Ascending aorta (tissue), 2 donors: ENCODE measurements at regions of chr1 and their contacts with region 1.

Region 1: GRCh38 chr1:59759156-59759925 is 55.4 kb upstream of the HOOK1 start:
- DNase-seq: peak; percentile 18 to 89
- H3K4me3 ChIP-seq: peak overlapping the region; percentile 27 to 51
- H3K27ac ChIP-seq: peak overlapping the region; percentile 10 to 40
- H3K4me1 ChIP-seq: peaks cover 0 to 5% of the 10 kb centered on the region in 2 donors
- H3K27me3 ChIP-seq: no peaks in the 10 kb centered on the region
- CTCF ChIP-seq: peak; percentile 92 to 96 (median 96)

Region 2: GRCh38 chr1:58515794-58516401 is 1243.4 kb before region 1 on chr1:
- intact Hi-C with region 1: loop called (anchors 10 kb)
- DNase-seq: peak in 1 of 2 donors; percentile 66
- H3K4me3 ChIP-seq: no peak overlapping the region
- H3K27ac ChIP-seq: no peak overlapping the region
- H3K4me1 ChIP-seq: no peaks in the 10 kb centered on the region
- H3K27me3 ChIP-seq: no peaks in the 10 kb centered on the region
- CTCF ChIP-seq: peak; percentile 52 to 72 (median 67)

Region 3: DNA sequence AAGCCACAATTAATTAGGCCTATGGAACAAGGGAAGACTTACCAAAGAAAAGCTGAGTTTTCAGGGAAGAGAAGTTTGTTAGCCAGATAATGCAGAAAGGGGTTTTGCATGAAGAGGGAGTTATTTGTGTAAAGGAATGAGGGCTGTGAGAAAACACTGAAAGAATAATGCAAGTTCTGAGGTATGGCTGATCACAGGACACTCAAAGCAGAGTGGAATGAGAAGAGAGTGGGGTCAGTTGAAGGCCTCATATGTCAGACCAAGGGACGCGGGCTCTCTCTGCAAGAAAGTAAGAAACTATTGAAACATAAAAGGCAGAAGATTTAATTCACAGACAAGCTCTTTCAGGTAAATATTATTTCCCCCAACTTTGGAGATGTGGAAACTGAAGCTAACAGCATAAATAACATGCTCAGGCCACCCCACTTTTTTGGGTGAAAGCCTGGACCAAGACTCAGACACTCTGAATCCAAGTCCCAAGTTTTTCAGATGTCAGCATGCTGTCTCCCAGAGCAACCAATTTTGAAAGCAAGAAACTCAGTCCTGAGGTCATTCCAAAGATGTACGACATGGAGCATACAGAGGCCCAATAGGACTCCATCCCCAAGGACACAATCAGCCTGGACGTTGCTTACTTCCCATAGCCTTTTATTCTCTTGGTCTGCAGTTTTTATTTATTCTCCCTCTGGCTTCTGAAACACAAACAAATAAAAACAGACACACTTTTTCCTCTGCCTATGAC is 509.8 kb before region 1 on chr1:
- intact Hi-C with region 1: no loop called
- DNase-seq: no peak
- H3K4me3 ChIP-seq: no peak overlapping the region
- H3K27ac ChIP-seq: peak overlapping the region in 1 of 2 donors; percentile 60
- H3K4me1 ChIP-seq: peaks cover 0 to 7% of the 10 kb centered on the region in 2 donors
- H3K27me3 ChIP-seq: no peaks in the 10 kb centered on the region
- CTCF ChIP-seq: no peak

Region 4: DNA sequence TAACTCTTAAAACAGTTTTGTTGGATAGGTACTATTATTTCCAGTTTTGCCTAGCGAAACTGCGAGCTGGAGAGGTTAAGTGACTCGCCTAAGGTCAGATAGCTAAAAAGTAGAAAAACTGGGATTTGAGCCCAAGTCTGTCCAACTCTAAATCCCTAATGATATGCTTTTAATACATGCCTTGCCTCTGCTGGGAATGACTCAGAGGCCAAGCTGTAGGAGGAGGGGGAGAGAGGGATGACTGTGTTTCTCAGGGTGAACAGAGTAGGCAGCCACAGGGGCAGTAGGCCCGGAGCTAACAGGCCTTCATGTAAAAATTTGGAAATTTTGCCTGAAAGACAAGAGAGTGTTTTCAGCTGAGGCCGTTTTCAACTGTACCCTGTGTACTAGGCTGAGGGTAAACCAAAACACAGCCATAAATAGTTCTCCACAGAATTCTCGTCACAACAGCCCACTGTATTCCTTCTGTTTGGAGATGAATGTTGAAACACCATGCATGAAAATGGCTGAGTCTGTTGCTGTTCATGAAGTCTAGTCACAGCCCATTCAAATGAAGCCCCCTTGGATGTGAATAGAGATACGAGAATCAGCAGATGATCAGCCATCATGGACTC is 52.1 kb before region 1 on chr1:
- intact Hi-C with region 1: loop called (anchors 5 kb)
- DNase-seq: peak; percentile 40 to 85
- H3K4me3 ChIP-seq: no peak overlapping the region
- H3K27ac ChIP-seq: peak overlapping the region; percentile 60 to 75
- H3K4me1 ChIP-seq: peaks cover 17 to 35% of the 10 kb centered on the region in 2 donors
- H3K27me3 ChIP-seq: no peaks in the 10 kb centered on the region
- CTCF ChIP-seq: no peak

Region 5: GRCh38 chr1:59730759-59731478 is 28.4 kb before region 1 on chr1:
- intact Hi-C with region 1: no loop called
- DNase-seq: peak; percentile 59 to 92
- H3K4me3 ChIP-seq: no peak overlapping the region
- H3K27ac ChIP-seq: peak overlapping the region; percentile 70 to 80
- H3K4me1 ChIP-seq: peaks cover 5 to 22% of the 10 kb centered on the region in 2 donors
- H3K27me3 ChIP-seq: no peaks in the 10 kb centered on the region
- CTCF ChIP-seq: no peak

Region 6: GRCh38 chr1:59776960-59777852 is 17.9 kb after region 1 on chr1:
- intact Hi-C with region 1: no loop called
- DNase-seq: no peak
- H3K4me3 ChIP-seq: no peak overlapping the region
- H3K27ac ChIP-seq: no peak overlapping the region
- H3K4me1 ChIP-seq: no peaks in the 10 kb centered on the region
- H3K27me3 ChIP-seq: no peaks in the 10 kb centered on the region
- CTCF ChIP-seq: no peak

Region 7: DNA sequence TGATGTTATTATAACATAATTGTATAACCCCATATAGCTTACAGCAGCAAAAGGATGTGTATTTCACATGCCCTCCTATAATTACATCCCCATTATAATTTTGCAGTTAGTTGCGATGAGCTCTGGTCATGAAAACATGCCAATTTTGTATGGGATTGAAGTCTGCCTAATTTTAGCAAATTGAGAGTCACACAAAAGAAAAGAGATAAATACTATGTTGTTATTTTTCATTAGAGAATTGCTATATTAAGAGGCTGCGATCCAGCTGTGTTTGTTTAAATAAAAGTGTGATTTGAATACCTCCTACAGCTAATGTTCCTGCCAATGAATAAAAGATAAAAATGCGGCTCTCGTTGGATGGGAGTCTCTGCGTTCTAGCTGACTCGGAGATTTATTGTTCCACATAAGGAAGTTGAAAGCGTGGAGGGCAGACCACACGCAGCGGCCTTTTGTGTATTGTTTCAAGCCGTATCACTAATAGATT is 862.1 kb after region 1 on chr1:
- intact Hi-C with region 1: no loop called
- DNase-seq: no peak
- H3K4me3 ChIP-seq: peak overlapping the region; percentile 7 to 27
- H3K27ac ChIP-seq: no peak overlapping the region
- H3K4me1 ChIP-seq: peaks cover 0 to 3% of the 10 kb centered on the region in 2 donors
- H3K27me3 ChIP-seq: no peaks in the 10 kb centered on the region
- CTCF ChIP-seq: no peak